HEK293 (cell line): ENCODE measurements at regions of chr6 and their contacts with region 1.

Region 1: DNA sequence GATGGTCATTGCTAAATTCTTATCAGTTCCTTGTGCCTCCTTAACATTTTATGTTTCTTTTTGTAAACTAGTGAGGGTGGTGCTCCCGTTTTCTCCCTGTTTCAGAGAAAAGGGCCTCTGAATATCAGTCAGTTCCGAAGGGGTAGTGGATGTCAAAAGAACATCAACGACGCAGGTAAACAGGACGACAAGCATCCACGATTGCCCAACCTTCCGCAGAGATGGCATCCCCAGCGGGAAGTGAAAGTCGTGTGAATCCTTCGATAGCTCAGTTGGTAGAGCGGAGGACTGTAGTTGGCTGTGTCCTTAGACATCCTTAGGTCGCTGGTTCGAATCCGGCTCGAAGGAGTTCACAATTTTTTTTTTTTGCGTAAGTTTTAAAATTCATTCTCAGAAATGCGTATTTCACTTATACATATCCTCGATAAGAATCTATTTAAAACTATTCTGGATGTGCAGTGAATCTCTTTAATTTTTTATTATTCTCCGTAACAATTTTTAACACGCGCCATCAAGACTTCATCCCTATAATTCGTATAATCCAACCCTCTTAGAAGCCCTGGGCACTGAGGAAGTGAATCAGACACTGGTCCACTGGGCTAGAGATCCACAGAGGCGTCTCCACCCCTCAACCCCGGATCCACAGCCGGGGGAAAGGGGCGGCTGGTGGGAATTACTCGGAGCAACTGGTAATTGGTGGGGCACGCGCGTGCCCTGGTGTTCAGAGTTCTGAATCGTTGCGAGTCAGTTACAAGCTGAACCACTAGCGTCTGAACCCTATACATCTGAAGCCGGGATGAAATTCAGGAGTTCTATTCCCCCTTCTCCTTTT is 27.9 kb upstream of the ABT1 start:
- H3K4me3 ChIP-seq: peak overlapping the region; percentile 70
- H3K27ac ChIP-seq: peak overlapping the region; percentile 62
- H3K4me1 ChIP-seq: no peaks in the 10 kb centered on the region
- CTCF ChIP-seq: peak; percentile 70

Region 2: GRCh38 chr6:26553635-26554446 is 15.0 kb before region 1 on chr6:
- CTCF ChIA-PET with region 1: interaction called, 10 read pairs
- POLR2A ChIA-PET with region 1: interaction called, 7 read pairs
- H3K4me3 ChIP-seq: peak overlapping the region; percentile 71
- H3K27ac ChIP-seq: peak overlapping the region; percentile 60
- H3K4me1 ChIP-seq: no peaks in the 10 kb centered on the region
- CTCF ChIP-seq: no peak

Region 3: GRCh38 chr6:26629359-26629758 is 60.5 kb after region 1 on chr6:
- CTCF ChIA-PET with region 1: no interaction called
- POLR2A ChIA-PET with region 1: no interaction called
- H3K4me3 ChIP-seq: no peak overlapping the region
- H3K27ac ChIP-seq: no peak overlapping the region
- H3K4me1 ChIP-seq: no peaks in the 10 kb centered on the region
- CTCF ChIP-seq: no peak

Region 4: DNA sequence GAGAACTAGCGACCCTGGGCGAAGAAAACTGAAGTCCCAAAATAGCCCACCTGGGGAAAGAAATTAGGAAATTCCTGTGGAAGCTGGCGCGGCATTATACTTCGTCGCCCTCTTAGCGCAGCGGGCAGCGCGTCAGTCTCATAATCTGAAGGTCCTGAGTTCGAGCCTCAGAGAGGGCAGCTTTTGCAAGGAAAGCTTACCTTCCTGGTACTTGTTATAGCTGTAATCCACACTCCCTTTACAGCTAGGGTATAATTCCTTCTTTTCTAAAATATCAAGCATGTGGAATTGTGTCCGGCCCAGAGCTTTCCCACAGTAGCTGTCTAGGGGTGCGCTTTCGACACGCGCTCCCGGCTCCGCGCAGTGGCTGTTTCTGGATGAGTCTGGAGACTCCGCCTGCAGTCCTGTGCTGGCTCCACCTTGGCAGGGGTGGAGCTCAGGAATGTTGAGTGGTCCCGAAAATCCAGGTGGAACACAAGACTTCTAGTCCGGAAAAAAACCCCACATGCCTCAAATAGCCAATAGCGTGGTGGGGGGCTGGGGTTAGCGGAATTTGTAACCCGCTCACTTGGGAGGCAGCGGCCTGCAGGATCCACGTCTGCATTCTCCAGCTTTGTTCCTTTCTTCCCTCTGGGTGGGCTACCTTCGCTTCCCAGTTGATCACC is 174.5 kb after region 1 on chr6:
- CTCF ChIA-PET with region 1: no interaction called
- POLR2A ChIA-PET with region 1: no interaction called
- H3K4me3 ChIP-seq: peak overlapping the region; percentile 48
- H3K27ac ChIP-seq: peak overlapping the region; percentile 67; the same call in 1 of the 2 replicates
- H3K4me1 ChIP-seq: no peaks in the 10 kb centered on the region; the same call in 1 of the 2 replicates
- CTCF ChIP-seq: no peak; the same call in 1 of the 2 replicates

Region 5: DNA sequence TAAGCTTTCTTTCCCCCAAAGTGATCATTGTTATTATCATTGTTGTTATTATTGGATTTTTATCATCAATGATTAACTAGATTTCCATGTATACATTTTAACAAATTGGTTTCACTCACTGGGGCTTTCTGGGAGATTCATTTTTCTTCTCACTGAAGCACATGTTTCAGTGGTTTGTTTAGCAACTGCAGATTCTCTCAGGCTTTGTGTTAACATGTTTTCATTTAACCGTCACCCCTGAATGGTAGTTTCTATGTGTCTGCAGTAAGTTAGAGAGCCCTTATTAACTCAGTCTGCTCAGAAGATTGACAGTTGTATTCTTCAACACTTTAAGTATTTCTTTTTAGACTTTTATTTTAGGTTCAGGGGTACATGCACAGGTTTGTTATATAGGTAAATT is 1670.8 kb after region 1 on chr6:
- CTCF ChIA-PET with region 1: no interaction called
- POLR2A ChIA-PET with region 1: no interaction called
- H3K4me3 ChIP-seq: no peak overlapping the region
- H3K27ac ChIP-seq: no peak overlapping the region
- H3K4me1 ChIP-seq: no peaks in the 10 kb centered on the region
- CTCF ChIP-seq: no peak